GM10248 (cell line): ENCODE measurements at regions of chrX and their contacts with region 1.

Region 1: DNA sequence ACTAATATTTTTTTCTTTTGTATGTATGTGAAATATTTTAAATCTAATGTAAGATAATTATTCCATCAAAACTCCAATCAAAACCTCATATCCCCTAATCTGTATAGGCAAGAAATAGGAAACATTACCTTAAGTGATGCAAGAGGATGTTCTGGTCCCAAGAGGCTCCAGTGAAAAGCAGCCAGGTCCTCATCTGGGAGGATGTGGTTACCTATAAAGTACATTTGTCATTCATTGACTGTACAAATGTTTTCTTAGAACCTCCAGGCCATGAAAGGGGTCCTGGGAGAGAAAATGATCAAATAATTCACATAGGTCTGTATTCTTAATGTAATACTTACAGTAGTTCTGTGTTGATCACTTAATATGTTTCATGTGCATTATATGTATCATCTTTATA is 25.5 kb downstream of the FAM120C start:
- DNase-seq: no peak
- CTCF ChIP-seq: no peak

Region 2: DNA sequence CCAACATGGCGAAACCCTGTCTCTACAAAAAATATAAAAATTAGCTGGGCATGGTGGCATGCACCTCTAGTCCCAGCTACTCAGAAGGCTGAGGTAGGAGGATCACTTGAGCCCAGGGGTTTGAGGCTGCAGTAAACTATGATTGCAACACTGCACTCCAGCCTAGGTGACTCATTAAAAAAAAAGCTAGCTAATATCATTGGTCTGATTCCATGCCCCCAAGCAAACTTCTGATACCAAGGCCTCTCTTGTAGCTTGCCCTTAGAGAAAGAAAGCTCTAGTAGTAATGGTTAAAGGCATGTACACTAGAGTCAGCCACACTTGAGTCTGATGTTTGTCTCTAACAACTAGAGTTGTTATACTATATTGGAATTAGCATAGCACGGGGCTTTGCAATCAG is 80.7 kb before region 1 on chrX:
- CTCF ChIA-PET with region 1: no interaction called
- POLR2A ChIA-PET with region 1: interaction called, 11 read pairs
- DNase-seq: no peak
- CTCF ChIP-seq: no peak